H1 (cell line): ENCODE measurements at regions of chr20 and their contacts with region 1.

Region 1: GRCh38 chr20:48657475-48658470 is 170.0 kb downstream of the PREX1 start:
- DNase-seq: peak in 1 of 2 experiments; percentile 75
- H3K4me3 ChIP-seq: no peak overlapping the region
- H3K27ac ChIP-seq: no peak overlapping the region
- H3K4me1 ChIP-seq: no peaks in the 10 kb centered on the region; a peak in 1 of 7 replicates
- H3K27me3 ChIP-seq: no peaks in the 10 kb centered on the region
- CTCF ChIP-seq: peak; percentile 85 to 96 (median 87)
- EP300 ChIP-seq: no peak
- POLR2A ChIP-seq: no peak
- RAD21 ChIP-seq: peak; percentile 96 to 99

Region 2: DNA sequence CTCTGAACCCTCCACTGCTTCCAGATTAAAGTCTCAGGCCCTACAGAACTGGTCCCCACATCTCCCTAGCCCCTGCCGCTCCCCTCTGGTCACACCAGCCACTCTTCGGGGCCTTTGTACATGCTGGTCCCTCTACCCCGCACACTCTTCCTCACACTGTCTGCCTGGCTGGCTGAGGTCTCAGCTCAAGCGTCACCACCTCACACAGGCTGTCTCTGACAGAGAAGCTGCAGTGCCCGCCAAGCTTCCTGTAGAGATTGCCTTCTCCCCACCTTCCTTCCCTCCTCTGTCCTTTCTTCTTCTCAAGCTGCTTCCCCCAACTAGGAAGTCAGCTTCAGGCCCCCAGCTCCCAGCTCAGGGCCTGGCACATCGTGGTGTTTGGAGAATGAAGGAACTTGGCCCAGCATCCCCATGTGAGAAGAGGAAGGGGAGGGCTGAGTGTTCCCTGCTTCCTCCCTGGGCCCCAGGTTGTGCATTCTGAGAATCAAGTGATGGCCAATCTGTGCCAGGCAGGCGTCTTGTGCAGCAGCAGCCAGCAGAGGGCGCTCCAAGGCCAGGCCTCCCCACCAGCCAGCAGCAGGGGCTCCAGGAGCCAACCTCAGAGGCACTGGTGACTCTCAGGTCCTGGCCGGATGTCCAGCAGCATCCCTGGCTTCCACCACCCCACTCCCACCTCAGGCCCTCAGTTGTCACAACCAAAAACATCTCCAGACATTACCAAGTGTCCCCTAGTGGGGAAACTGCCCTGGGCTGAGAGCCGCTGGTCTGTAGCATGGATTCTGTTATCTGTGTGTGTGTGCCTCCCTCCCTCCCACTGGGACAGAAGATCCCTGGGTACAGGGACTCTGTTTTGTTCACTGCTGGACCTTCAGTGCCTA is 22.1 kb before region 1 on chr20:
- CTCF ChIA-PET with region 1: interaction called, 14 read pairs
- POLR2A ChIA-PET with region 1: no interaction called
- DNase-seq: peak; percentile 41 to 84
- H3K4me3 ChIP-seq: no peak overlapping the region
- H3K27ac ChIP-seq: no peak overlapping the region
- H3K4me1 ChIP-seq: peaks cover 0 to 3% (median 2%) of the 10 kb centered on the region in 4 experiments; a peak in 5 of 7 replicates
- H3K27me3 ChIP-seq: no peaks in the 10 kb centered on the region
- CTCF ChIP-seq: peak; percentile 84 to 96 (median 94)
- EP300 ChIP-seq: no peak
- POLR2A ChIP-seq: no peak
- RAD21 ChIP-seq: peak; percentile 93 to 95

Region 3: DNA sequence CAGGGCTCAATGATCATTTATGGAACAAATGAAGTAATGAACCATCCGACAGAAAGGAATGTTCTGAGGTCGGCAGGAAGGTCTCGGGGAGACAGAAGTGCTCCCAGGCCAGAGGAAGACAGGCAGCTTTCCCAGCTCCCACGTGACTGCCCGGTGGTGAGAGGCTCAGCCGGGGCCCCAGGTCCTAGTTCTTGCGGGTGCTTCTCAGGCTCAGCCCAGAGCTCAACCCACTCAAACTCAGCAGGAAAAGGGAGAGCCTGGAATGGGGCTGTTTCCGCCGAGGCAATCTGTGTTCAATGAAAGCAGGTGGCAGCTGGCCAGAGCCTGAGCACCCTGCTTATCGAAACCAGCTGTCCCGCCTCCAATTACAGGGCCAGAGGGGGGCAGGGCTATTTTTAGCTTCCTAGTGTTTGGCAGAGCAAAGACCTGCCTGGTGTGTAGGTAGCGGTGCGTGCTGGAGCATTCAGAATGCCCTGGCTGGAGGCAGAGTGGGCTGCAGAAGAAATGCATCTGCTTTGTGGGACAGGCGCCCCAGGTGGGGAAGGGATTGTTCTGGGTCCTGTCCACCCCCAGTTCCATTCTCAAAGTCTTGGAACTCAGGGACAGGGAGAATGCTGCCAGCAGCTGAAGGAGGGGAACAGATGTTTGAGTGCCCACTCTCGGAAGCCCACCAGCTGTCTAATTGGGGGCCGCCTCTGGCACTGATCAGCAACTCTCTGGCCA is 24.9 kb after region 1 on chr20:
- CTCF ChIA-PET with region 1: interaction called, 16 read pairs
- POLR2A ChIA-PET with region 1: interaction called, 3 read pairs
- DNase-seq: peak in 1 of 2 experiments; percentile 64
- H3K4me3 ChIP-seq: peak overlapping the region in 3 of 4 experiments; percentile 7 to 18 (median 12); a peak in 3 of 8 replicates
- H3K27ac ChIP-seq: peak overlapping the region; percentile 75
- H3K4me1 ChIP-seq: peaks cover 10 to 31% (median 16%) of the 10 kb centered on the region in 4 experiments
- H3K27me3 ChIP-seq: no peaks in the 10 kb centered on the region
- CTCF ChIP-seq: no peak
- EP300 ChIP-seq: peak in 1 of 2 experiments; percentile 85; a peak in 1 of 3 replicates
- POLR2A ChIP-seq: peak in 1 of 2 experiments; percentile 38; a peak in 1 of 3 replicates
- RAD21 ChIP-seq: peak in 1 of 2 experiments; percentile 2; a peak in 2 of 4 replicates

Region 4: DNA sequence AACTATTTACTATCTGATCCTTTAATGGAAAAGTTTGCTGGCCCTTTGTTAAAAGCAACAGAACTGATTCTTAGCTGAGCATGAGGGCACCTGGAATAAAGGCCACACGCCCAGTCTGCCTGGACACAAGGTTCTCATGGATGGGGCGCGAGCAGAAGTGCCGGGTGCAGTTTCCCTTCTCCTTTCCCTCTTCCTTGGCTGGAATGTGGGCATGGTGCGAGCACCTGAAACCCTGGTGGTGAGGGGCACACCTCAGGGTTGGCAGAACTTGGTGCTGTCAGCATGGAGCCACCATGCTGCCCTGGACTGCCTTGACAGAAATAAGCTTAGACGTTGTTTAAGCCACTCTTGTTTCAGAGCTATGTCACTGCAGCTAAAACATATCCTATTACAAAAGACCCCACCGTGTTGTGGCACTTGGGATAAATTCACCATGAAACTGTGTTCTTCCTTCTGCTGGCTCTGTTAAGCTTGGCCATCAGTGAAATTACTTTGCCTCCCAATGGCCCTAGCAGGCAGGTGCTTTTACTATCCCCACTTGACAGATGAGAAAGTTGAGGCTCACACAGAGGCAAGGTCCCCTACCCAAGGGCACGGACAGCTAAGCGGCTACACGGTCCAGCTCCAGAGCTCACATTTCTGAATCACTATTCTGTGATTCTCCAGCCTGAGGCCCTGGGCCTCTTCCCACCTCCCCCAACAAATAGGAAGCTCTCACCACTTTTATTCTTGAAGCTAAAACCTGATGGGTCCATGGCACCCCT is 54.1 kb after region 1 on chr20:
- CTCF ChIA-PET with region 1: interaction called, 186 read pairs
- POLR2A ChIA-PET with region 1: no interaction called
- DNase-seq: no peak
- H3K4me3 ChIP-seq: no peak overlapping the region
- H3K27ac ChIP-seq: no peak overlapping the region
- H3K4me1 ChIP-seq: peaks cover 0 to 3% (median 0%) of the 10 kb centered on the region in 4 experiments; a peak in 1 of 7 replicates
- H3K27me3 ChIP-seq: no peaks in the 10 kb centered on the region
- CTCF ChIP-seq: no peak
- EP300 ChIP-seq: no peak
- POLR2A ChIP-seq: no peak
- RAD21 ChIP-seq: no peak

Region 5: DNA sequence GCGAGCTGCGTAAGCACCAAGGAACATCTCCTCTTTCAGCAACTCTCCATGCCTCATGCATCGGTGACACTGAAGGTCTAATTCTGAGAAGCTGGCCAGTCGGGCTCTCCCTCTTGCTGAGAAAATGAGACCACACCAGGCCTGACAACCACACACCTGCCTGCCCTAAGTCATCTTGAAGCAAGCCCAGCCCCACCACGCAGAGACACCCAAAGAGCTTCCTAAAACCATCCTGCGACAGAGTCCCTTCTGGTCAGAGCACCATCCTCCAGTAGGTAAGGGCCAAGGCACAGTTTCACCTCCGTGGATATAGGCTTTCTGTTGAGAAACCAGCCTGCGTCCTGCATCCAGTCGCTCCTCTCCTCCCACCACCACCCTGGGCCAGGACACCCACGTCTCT is 143.5 kb after region 1 on chr20:
- CTCF ChIA-PET with region 1: interaction called, 10 read pairs
- POLR2A ChIA-PET with region 1: no interaction called
- DNase-seq: no peak
- H3K4me3 ChIP-seq: no peak overlapping the region
- H3K27ac ChIP-seq: no peak overlapping the region
- H3K4me1 ChIP-seq: peaks cover 0 to 15% (median 7%) of the 10 kb centered on the region in 4 experiments; a peak in 6 of 7 replicates
- H3K27me3 ChIP-seq: no peaks in the 10 kb centered on the region; a peak in 1 of 7 replicates
- CTCF ChIP-seq: no peak
- EP300 ChIP-seq: no peak
- POLR2A ChIP-seq: no peak
- RAD21 ChIP-seq: no peak

Region 6: GRCh38 chr20:48850257-48850975 is 192.6 kb after region 1 on chr20:
- CTCF ChIA-PET with region 1: interaction called, 17 read pairs
- POLR2A ChIA-PET with region 1: no interaction called
- DNase-seq: no peak
- H3K4me3 ChIP-seq: no peak overlapping the region
- H3K27ac ChIP-seq: no peak overlapping the region
- H3K4me1 ChIP-seq: peaks cover 0 to 13% (median under 1%) of the 10 kb centered on the region in 4 experiments; a peak in 4 of 7 replicates
- H3K27me3 ChIP-seq: 0 out of 7 replicates have a peak, but pooled peaks cover 0 to 2% (median 0%) of the 10 kb centered on the region in 4 experiments
- CTCF ChIP-seq: no peak
- EP300 ChIP-seq: no peak
- POLR2A ChIP-seq: no peak
- RAD21 ChIP-seq: no peak

Region 7: GRCh38 chr20:48917296-48917695 is 259.5 kb after region 1 on chr20:
- CTCF ChIA-PET with region 1: interaction called, 163 read pairs
- POLR2A ChIA-PET with region 1: no interaction called
- DNase-seq: no peak
- H3K4me3 ChIP-seq: no peak overlapping the region
- H3K27ac ChIP-seq: no peak overlapping the region
- H3K4me1 ChIP-seq: peaks cover 0 to under 1% (median 0%) of the 10 kb centered on the region in 4 experiments; a peak in 1 of 7 replicates
- H3K27me3 ChIP-seq: no peaks in the 10 kb centered on the region
- CTCF ChIP-seq: no peak
- EP300 ChIP-seq: no peak
- POLR2A ChIP-seq: no peak
- RAD21 ChIP-seq: no peak